ENCODE measurements at regions of chr18 and their contacts with region 1.

Region 1: DNA sequence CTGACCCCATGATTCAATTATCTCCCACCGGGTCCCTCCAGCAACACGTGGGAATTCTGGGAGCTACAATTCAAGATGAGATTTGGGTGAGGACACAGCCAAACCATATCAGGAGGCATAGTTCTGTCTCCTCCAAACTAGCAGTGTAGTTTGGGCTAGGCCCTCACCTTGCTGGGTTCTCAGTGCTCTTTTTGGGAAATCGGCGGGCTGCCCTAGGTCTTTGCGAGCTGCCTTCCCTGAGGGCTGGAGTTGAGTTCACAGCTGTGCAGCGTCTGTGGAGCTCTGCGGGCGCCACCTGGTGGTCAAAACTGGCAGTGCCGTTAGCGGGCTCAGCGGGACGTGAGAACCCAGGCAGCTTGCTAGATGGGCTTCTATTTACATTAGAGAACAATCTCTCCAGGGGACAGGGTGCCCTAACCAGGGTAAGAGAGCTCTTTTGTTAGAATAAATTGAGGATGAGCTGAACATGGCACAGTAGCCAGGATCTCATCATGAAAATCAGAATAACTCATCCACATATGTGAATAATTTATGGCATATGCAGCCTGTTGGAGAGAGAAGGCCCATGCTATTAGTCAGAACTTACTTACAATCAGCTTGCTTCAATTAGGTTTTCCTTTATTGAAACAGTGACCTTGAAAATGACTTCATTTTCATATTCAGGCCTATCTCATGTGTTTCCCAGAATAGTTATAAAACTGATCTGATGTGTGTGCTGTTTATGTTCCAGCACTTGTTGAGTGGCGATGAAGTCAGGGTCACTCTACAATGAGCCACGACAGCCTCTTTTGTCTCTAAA is 27.4 kb upstream of the YES1 start:
- DNase-seq: peak; percentile 71 to 73
- ATAC-seq: peak; percentile 98 to 99
- H3K4me3 ChIP-seq: no peak overlapping the region
- H3K27ac ChIP-seq: no peak overlapping the region
- H3K4me1 ChIP-seq: no peaks in the 10 kb centered on the region
- CTCF ChIP-seq: peak; percentile 72
- EP300 ChIP-seq: no peak
- POLR2A ChIP-seq: no peak
- RAD21 ChIP-seq: peak; percentile 61 to 64; a peak in 4 of 5 replicates

Region 2: DNA sequence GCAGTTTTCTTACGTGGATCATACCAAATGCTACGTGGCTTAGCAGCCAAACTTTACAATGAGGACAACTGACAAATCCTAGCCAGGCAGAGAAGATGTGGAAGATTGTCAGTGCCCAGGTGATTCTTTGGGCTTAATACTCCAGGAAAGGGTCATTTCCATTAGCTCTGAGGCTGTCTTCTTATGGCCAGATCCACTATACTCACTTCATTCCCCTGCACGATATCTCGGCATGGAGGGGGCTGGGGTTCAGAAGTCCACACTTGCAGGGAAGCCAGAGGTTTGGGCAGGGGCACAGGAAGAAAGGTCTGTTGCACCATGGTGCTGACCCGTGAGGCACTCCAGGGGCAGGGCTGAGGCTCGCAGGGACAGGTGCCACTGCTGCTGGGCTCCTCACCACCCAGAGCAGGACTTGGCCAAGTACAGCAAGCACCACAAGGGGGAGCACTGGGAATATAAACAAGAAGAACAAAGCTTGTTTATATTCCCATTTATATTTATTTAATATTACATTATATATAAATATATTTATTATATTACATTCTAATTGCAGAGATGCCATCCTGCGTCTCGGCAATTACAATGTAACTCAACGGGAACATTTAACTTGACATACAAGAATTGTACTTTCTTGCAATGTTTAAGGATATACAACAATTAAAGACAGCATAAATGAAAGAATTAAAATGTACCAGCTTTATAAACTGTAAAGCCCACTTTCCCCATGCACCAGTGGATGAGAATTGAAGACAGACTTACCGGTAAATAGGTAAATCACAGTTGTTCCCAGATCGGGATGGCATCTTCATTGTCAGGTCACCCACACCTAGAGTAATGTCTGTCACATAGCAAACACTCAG is 215.4 kb before region 1 on chr18:
- CTCF ChIA-PET with region 1: interaction called, 94 read pairs
- POLR2A ChIA-PET with region 1: no interaction called
- DNase-seq: peak; percentile 18 to 73
- ATAC-seq: peak; percentile 89 to 93
- H3K4me3 ChIP-seq: no peak overlapping the region
- H3K27ac ChIP-seq: no peak overlapping the region
- H3K4me1 ChIP-seq: no peaks in the 10 kb centered on the region
- CTCF ChIP-seq: peak; percentile 62
- EP300 ChIP-seq: no peak
- POLR2A ChIP-seq: no peak
- RAD21 ChIP-seq: peak; percentile 62 to 63

Region 3: GRCh38 chr18:741931-742512 is 97.4 kb before region 1 on chr18:
- CTCF ChIA-PET with region 1: interaction called, 85 read pairs
- POLR2A ChIA-PET with region 1: no interaction called
- DNase-seq: peak; percentile 37 to 47
- ATAC-seq: peak; percentile 54 to 73; a peak in 5 of 6 replicates
- H3K4me3 ChIP-seq: no peak overlapping the region
- H3K27ac ChIP-seq: no peak overlapping the region
- H3K4me1 ChIP-seq: no peaks in the 10 kb centered on the region
- CTCF ChIP-seq: peak; percentile 62
- EP300 ChIP-seq: no peak
- POLR2A ChIP-seq: no peak
- RAD21 ChIP-seq: peak; percentile 70 to 72

Measured in A549 (cell line).